ENCODE measurements at regions of chr10 and their contacts with region 1.

Region 1: DNA sequence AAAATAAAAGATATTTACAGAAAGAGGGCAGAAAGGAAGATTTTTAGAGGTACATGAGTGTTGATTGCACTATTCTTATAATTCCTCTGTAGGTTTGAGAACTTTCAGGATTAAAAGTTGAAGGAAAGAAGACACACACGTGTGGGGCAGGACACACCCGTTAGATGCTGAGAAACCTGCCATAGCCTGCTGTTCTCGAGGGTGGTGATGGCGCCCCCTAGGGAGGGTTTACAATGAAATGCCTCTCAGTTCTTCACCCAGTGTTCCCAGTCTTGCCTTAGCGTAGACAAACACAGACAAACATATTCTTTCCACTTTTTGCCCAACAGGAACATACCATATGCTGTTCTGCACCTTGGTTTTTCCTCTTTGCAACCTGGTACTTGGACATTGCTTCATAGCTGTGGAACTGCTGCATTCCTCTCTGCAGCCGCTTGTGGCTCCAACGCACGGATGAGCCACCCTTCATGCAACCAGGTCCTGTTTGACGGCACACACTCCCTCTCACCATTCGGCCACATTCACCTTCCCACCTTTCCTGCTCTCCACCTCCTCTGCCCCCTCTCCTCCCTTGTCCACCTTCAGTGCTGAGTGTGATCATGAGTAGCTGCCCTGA is 23.3 kb upstream of the HSPA12A start:
- DNase-seq: peak; percentile 7
- H3K4me3 Mint-ChIP-seq: no peak overlapping the region
- H3K27ac Mint-ChIP-seq: no peak overlapping the region
- H3K4me1 Mint-ChIP-seq: no peaks in the 10 kb centered on the region
- H3K27me3 Mint-ChIP-seq: peaks cover 4% of the 10 kb centered on the region

Region 2: GRCh38 chr10:116687633-116688032 is 78.0 kb before region 1 on chr10:
- intact Hi-C with region 1: loop called (anchors 1 kb)
- DNase-seq: no peak
- H3K4me3 Mint-ChIP-seq: no peak overlapping the region
- H3K27ac Mint-ChIP-seq: no peak overlapping the region
- H3K4me1 Mint-ChIP-seq: no peaks in the 10 kb centered on the region
- H3K27me3 Mint-ChIP-seq: no peaks in the 10 kb centered on the region

Region 3: DNA sequence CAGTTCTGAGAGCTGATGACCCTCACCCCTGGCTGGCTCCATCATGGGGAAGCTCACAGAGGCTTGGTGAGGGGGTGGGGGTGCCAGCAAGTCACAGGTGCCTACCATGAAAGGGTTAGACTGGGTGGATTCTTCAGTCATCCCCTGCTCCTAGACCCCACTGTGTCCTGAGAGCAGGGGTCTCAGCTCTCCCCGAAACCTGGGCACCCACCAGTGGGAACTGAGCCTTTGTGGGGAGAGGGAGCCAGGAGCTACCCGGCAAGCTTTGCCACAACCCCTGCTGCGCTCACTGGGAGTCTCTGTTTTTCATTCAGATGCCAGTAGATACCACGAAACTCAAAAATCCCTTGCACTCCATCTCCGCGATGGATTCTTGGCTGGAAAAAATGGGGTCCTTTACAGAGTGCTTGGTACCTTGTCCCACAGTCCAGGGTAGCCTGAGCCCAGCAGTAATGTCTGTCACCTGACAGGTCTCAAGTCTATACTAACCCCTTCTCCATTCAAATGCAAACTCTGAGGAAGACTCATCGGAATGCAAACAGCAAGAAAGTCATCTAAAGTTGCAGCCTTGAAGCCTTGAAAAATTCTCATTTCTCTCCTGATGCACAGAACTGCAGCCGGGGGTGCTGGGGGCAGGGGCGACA is 34.8 kb after region 1 on chr10:
- intact Hi-C with region 1: no loop called
- DNase-seq: no peak
- H3K4me3 Mint-ChIP-seq: no peak overlapping the region
- H3K27ac Mint-ChIP-seq: no peak overlapping the region
- H3K4me1 Mint-ChIP-seq: no peaks in the 10 kb centered on the region
- H3K27me3 Mint-ChIP-seq: peaks cover 13% of the 10 kb centered on the region

Region 4: DNA sequence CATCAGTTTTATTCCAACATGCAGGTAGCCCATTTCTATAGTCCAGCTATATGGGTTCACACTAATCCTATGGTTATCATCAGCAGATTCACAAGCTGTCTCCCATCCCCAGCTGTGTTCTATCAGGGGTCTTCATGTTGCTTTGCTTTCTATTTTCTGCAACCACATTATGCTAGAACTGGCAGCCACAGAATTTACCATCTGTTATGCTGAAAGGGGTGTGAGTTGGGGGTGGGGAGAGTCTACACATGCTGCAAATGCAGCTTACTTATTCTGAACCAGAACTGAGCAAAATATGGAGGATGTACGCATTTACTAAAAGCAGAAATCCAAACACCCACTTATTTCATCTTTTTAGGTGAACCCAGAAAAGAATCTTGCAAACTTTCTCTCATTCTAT is 206.5 kb after region 1 on chr10:
- intact Hi-C with region 1: no loop called
- DNase-seq: no peak
- H3K4me3 Mint-ChIP-seq: no peak overlapping the region
- H3K27ac Mint-ChIP-seq: no peak overlapping the region
- H3K4me1 Mint-ChIP-seq: no peaks in the 10 kb centered on the region
- H3K27me3 Mint-ChIP-seq: peaks cover 6% of the 10 kb centered on the region